Prostate gland (tissue), 2 donors: ENCODE measurements at regions of chr3 and their contacts with region 1.

Region 1: GRCh38 chr3:53938645-53939044 is 47.0 kb upstream of the SELENOK start:
- DNase-seq: peak; percentile 20
- H3K4me3 ChIP-seq: no peak overlapping the region
- H3K27ac ChIP-seq: no peak overlapping the region
- H3K4me1 ChIP-seq: no peaks in the 10 kb centered on the region
- H3K27me3 ChIP-seq: no peaks in the 10 kb centered on the region
- CTCF ChIP-seq: peak; percentile 27 to 77 (median 68)
- POLR2A ChIP-seq: no peak

Region 2: GRCh38 chr3:54120657-54121413 is 182.2 kb after region 1 on chr3:
- intact Hi-C with region 1: loop called (anchors 10 kb)
- DNase-seq: no peak
- H3K4me3 ChIP-seq: peak overlapping the region; percentile 37 to 45
- H3K27ac ChIP-seq: no peak overlapping the region
- H3K4me1 ChIP-seq: peaks cover 7% of the 10 kb centered on the region
- H3K27me3 ChIP-seq: peaks cover 13% of the 10 kb centered on the region
- CTCF ChIP-seq: no peak
- POLR2A ChIP-seq: no peak

Region 3: DNA sequence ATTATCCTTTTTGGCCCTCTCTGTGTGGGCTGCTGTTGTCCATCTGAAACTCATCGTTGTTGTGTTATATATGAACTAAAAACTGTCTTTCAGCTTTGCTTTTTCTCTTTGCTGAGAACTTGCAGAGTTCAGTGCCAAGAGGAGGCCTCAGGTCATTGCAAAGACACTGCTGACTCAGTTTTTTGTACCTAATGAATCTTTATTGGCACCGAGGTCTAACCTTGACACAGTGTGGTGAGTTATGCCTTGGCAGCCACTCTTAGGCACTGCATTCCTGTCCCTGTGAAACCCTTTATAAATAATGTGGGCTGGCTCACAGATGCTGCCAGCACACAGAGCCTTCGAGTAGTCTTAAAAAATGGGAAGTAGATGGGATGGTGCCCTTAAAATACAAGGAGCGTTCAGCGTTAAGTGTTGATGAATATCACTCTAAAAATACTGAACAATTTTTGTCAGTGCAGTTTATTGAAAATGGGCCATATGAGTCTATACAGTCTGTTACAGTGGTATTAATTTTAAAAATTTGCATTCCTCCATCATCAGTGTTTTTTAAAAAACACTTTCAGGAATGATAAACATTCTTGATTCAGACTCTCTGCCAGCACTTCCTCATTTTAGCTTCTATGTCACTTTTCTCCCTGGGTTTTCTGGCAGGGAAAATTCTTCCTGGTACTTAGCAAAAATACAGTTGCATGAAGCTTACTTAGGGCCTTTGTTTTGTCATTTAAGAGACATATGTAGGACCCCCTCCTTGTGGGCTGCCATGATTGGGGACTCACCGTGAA is 417.8 kb after region 1 on chr3:
- intact Hi-C with region 1: loop called (anchors 10 kb)
- DNase-seq: peak; percentile 57
- H3K4me3 ChIP-seq: no peak overlapping the region
- H3K27ac ChIP-seq: no peak overlapping the region
- H3K4me1 ChIP-seq: no peaks in the 10 kb centered on the region
- H3K27me3 ChIP-seq: no peaks in the 10 kb centered on the region
- CTCF ChIP-seq: no peak
- POLR2A ChIP-seq: no peak

Region 4: DNA sequence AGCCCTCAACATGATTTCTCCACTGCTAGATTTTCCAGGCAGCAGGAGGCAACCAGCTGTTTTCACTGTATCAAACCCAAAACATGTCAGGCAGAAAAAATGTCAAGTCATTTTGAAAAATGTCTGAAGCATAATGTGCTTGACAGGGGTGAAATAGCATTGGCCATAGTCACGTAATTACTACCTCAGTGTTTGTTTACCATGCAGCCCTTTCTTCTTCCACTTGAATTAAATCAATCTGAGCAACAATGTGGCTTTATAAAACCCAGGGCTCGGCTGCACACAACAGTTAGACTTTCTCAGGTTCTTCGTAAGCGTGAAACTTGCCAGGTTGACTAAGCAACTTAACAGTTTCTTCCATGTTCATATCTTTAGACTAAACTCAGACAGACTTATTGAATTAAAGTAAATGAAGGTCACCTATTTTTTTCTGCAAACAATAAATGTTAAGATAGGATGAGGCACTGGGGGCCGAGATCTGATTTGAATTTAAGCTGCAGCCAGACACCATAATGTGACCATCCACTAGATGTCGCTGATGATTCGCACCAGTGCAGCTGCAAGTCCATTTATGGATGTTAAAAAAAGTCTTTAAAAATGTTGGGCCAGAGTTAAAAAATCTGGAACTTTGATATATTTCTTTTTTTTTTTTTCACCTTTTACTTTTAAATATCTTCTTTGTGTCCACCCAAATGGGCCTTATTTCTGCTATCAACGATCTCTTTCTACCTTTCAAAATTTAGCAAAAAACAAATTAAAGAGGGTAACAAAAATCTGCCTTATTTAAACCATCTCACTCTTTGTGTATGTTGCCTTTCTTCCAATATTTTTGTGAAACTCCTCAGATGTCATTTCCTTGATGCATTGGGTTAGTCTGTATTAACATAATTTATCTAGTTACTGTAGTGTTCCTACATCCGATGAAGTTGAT is 489.6 kb after region 1 on chr3:
- intact Hi-C with region 1: loop called (anchors 5 kb)
- DNase-seq: peak; percentile 61
- H3K4me3 ChIP-seq: no peak overlapping the region
- H3K27ac ChIP-seq: no peak overlapping the region
- H3K4me1 ChIP-seq: no peaks in the 10 kb centered on the region
- H3K27me3 ChIP-seq: no peaks in the 10 kb centered on the region
- CTCF ChIP-seq: peak; percentile 29 to 82 (median 68)
- POLR2A ChIP-seq: no peak

Region 5: GRCh38 chr3:54853573-54854404 is 915.1 kb after region 1 on chr3:
- intact Hi-C with region 1: loop called (anchors 10 kb)
- DNase-seq: peak; percentile 64
- H3K4me3 ChIP-seq: no peak overlapping the region
- H3K27ac ChIP-seq: no peak overlapping the region
- H3K4me1 ChIP-seq: no peaks in the 10 kb centered on the region
- H3K27me3 ChIP-seq: no peaks in the 10 kb centered on the region
- CTCF ChIP-seq: peak; percentile 78 to 88 (median 83)
- POLR2A ChIP-seq: no peak